Lower leg skin (tissue), 4 donors: ENCODE measurements at regions of chr2 and their contacts with region 1.

Region 1: GRCh38 chr2:56183643-56184499 is at the start of gene CCDC85A:
- DNase-seq: peak; percentile 77 to 97
- H3K4me3 ChIP-seq: peak within 1 kb of the TSS; percentile 63
- CTCF ChIP-seq: peak in 1 of 3 donors; percentile 17
- POLR2A ChIP-seq: no peak
- total RNA-seq, gene CCDC85A: 2.7 to 3.7 (median 3.6) TPM

Region 2: GRCh38 chr2:56749152-56749752 is 565.4 kb after region 1 on chr2:
- intact Hi-C with region 1: loop called (anchors 5 kb)
- DNase-seq: no peak
- H3K4me3 ChIP-seq: no peak overlapping the region
- CTCF ChIP-seq: no peak
- POLR2A ChIP-seq: no peak

Region 3: GRCh38 chr2:57516698-57517340 is 1332.9 kb after region 1 on chr2:
- intact Hi-C with region 1: loop called (anchors 10 kb)
- DNase-seq: no peak
- H3K4me3 ChIP-seq: no peak overlapping the region
- CTCF ChIP-seq: no peak
- POLR2A ChIP-seq: no peak

Region 4: GRCh38 chr2:57693177-57693576 is 1509.3 kb after region 1 on chr2:
- intact Hi-C with region 1: no loop called
- DNase-seq: no peak
- H3K4me3 ChIP-seq: no peak overlapping the region
- CTCF ChIP-seq: no peak
- POLR2A ChIP-seq: no peak